Dendritic cell treated with granulocyte-macrophage colony-stimulating factor and Interleukin-4, amounts not matched to agents 40 ng/mL and 50 ng/mL, for 4 days (primary cell): ENCODE measurements at regions of chr11 and their contacts with region 1.

Region 1: DNA sequence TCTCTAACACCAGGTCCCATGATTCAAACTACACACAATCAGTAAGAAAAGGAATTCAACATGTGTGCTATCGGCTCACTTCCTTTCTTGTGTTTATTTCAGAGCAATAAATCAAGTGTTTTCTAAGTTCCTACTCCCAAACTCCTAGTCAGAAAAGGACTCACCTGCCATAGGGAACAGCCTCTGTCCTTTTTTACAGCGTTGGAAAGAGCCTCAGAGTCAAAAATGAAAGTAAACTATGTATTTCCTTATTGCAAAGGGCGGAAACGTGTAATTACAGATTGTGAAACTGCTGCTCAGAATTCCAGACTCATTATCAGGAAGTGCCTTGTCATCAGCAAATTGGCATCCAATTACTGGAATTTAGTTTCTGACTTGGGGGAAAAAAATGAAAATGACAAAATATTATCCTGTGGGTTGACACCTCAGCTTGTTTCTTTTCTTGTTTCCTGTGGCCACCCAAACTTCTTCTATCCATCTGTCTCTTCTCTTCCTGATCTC is at the start of gene CASP4:
- H3K4me3 Mint-ChIP-seq: peak within 1 kb of the TSS; percentile 81
- H3K27ac Mint-ChIP-seq: peak within 1 kb of the TSS; percentile 93
- H3K4me1 Mint-ChIP-seq: peaks cover 35% of the 10 kb centered on the region
- H3K27me3 Mint-ChIP-seq: no peaks in the 10 kb centered on the region

Region 2: DNA sequence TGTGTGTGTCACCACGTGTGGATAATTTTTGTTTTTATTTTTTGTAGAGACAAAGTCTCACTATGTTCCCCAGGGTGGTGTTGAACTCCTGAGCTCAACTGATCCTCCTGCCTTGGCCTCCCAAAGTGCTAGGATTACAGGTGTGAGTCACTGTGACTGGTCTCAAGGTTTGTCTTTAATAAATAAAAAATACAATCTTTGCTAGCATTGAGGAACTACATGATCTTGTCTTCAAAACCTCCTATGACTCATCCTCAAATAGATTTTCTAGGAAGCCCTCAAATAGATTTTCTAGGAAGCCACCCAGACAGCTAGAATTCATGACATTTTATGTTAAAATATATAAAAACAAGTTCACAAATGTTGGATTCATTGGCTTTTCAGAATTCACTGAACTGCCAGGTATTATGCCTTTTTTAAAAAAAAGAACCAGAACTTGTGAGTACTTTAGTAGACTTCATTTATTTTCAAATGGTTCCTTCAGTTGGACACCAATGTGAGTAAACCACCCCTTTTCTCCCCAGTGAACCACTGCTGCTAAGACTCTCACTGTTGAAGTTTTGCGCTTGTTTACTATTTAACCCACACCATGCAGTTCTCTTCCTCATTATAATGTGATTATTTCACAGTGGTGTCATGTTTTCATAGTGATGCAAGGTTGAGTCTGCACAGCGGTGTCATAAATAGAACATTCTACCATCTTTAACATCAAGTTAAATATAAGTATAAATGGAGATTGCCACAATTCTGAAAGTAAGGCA is 374.0 kb before region 1 on chr11:
- intact Hi-C with region 1: loop called (anchors 10 kb)
- H3K4me3 Mint-ChIP-seq: no peak overlapping the region
- H3K27ac Mint-ChIP-seq: peak overlapping the region; percentile 86
- H3K4me1 Mint-ChIP-seq: peaks cover 30% of the 10 kb centered on the region
- H3K27me3 Mint-ChIP-seq: no peaks in the 10 kb centered on the region

Region 3: GRCh38 chr11:104836691-104837090 is 131.7 kb before region 1 on chr11:
- intact Hi-C with region 1: loop called (anchors 5 kb)
- H3K4me3 Mint-ChIP-seq: no peak overlapping the region
- H3K27ac Mint-ChIP-seq: no peak overlapping the region
- H3K4me1 Mint-ChIP-seq: peaks cover 13% of the 10 kb centered on the region
- H3K27me3 Mint-ChIP-seq: no peaks in the 10 kb centered on the region

Region 4: GRCh38 chr11:105034813-105035620 is 66.6 kb after region 1 on chr11 and contains the start of gene CASP1:
- intact Hi-C with region 1: loop called (anchors 2 kb)
- H3K4me3 Mint-ChIP-seq: peak within 1 kb of the TSS; percentile 88
- H3K27ac Mint-ChIP-seq: peak within 1 kb of the TSS; percentile 96
- H3K4me1 Mint-ChIP-seq: peaks cover 63% of the 10 kb centered on the region
- H3K27me3 Mint-ChIP-seq: no peaks in the 10 kb centered on the region

Region 5: GRCh38 chr11:105181100-105181499 is 212.7 kb after region 1 on chr11:
- intact Hi-C with region 1: loop called (anchors 10 kb)
- H3K4me3 Mint-ChIP-seq: no peak overlapping the region
- H3K27ac Mint-ChIP-seq: peak overlapping the region; percentile 82
- H3K4me1 Mint-ChIP-seq: peaks cover 20% of the 10 kb centered on the region
- H3K27me3 Mint-ChIP-seq: no peaks in the 10 kb centered on the region